ENCODE measurements at regions of chr14 and their contacts with region 1.

Region 1: GRCh38 chr14:22986508-22987054 is 4.2 kb upstream of the AJUBA start:
- DNase-seq: peak; percentile 70 to 95 (median 84)
- ATAC-seq: peak; percentile 58 to 70 (median 64)
- H3K4me3 ChIP-seq: no peak overlapping the region
- H3K4me3 Mint-ChIP-seq: no peak overlapping the region
- H3K27ac ChIP-seq: no peak overlapping the region
- H3K27ac Mint-ChIP-seq: no peak overlapping the region
- H3K4me1 ChIP-seq: peaks cover 0 to 20% of the 10 kb centered on the region in 2 experiments
- H3K4me1 Mint-ChIP-seq: peaks cover 0 to 1% (median 0%) of the 10 kb centered on the region in 3 donors
- H3K27me3 ChIP-seq: peaks cover 0 to 12% of the 10 kb centered on the region in 2 experiments
- H3K27me3 Mint-ChIP-seq: no peaks in the 10 kb centered on the region

Region 2: DNA sequence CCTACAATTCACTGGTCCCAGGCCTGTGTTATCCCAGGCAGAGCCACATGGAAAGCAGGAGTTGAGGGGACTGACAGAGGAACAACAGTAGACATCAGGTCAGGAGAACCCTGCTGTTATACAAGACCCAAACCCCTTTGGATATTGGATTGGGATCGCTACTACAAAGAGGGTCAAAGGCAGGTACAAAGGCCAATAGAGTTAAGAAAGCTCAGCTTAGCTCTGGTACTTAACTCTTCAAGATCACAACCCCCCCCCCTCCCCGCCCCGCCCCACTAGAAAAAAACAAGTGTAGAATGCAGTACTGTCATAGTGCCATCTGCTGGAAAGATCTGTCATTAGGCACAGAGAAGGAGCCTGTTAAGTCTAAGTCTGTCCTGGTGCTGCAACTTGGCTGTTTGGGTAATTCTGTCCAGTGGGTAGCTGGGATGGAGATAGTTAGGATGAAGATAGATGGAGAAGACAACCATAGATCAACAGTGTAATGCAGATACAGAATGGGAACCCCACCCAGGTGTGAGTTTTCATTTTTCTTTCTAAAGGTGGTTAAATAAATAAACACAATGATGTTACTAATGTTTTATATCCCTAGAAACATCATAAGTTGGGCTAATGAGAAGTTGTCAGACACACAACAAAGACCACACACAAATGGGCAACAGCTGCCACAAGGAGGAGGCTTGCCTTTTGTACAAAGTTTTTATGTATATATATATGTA is 86.3 kb before region 1 on chr14:
- CTCF ChIA-PET with region 1: no interaction called
- POLR2A ChIA-PET with region 1: interaction called in 1 of 2 experiments, 17 read pairs
- DNase-seq: peak in 26 of 35 experiments; percentile 17 to 85 (median 39)
- ATAC-seq: peak; percentile 73 to 81 (median 80)
- H3K4me3 ChIP-seq: no peak overlapping the region
- H3K4me3 Mint-ChIP-seq: no peak overlapping the region
- H3K27ac ChIP-seq: no peak overlapping the region
- H3K27ac Mint-ChIP-seq: peak overlapping the region in 1 of 2 donors; percentile 41
- H3K4me1 ChIP-seq: peaks cover 2 to 10% of the 10 kb centered on the region in 2 experiments
- H3K4me1 Mint-ChIP-seq: peaks cover 8 to 11% (median 9%) of the 10 kb centered on the region in 3 donors
- H3K27me3 ChIP-seq: no peaks in the 10 kb centered on the region
- H3K27me3 Mint-ChIP-seq: no peaks in the 10 kb centered on the region

Region 3: GRCh38 chr14:22973217-22974032 is 13.2 kb before region 1 on chr14:
- CTCF ChIA-PET with region 1: interaction called, 23 read pairs
- POLR2A ChIA-PET with region 1: interaction called in 1 of 2 experiments, 7 read pairs
- DNase-seq: peak in 11 of 35 experiments; percentile 9 to 71 (median 30)
- ATAC-seq: peak; percentile 39 to 66 (median 60)
- H3K4me3 ChIP-seq: no peak overlapping the region
- H3K4me3 Mint-ChIP-seq: no peak overlapping the region
- H3K27ac ChIP-seq: no peak overlapping the region
- H3K27ac Mint-ChIP-seq: no peak overlapping the region
- H3K4me1 ChIP-seq: no peaks in the 10 kb centered on the region
- H3K4me1 Mint-ChIP-seq: no peaks in the 10 kb centered on the region
- H3K27me3 ChIP-seq: peaks cover 0 to 4% of the 10 kb centered on the region in 2 experiments
- H3K27me3 Mint-ChIP-seq: peaks cover 0 to 2% of the 10 kb centered on the region in 2 donors

Region 4: DNA sequence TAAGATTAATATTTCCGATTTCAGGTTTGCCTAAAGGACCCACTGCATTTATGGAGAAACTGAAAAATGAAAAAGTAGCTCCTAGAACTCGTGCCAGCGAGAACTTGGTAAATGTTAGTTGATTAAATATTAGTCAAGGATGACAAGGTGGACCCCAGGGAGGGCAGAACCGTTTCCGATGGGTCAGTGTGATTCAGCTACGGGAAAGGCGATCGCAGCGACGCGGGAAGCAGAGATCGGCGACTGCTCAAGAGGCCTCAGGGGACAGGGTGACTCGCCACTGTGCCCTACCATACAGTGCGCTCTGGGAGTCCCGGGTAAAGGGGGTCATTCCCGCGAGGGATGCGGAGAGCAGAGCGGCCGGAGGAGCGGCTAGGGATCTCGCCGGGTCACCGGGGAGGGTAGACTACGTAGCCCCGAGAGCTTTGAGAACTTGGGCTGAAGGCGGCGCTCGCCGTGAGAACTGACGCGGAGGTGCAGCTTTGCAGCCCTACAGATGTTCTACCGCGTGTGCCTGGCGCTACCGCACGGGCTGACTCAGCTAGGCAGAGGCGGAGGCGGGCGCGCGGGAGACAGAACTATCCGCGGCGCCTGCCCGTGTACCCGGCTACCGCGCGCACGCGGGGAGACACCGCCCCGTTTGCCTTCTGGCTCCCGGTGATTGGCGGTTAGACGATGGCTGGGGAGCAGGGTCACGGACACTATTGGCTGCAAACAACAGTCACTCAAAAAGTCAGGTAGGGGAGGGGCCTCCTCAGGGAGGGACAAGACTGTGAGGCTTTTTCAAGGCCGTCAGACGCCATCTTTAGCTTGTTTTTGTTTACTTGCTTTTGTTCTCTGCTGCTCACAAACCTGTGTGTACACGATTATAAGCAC is 20.2 kb after region 1 on chr14:
- CTCF ChIA-PET with region 1: interaction called, 4 to 47 read pairs
- POLR2A ChIA-PET with region 1: interaction called, 3 to 10 read pairs
- DNase-seq: peak; percentile 89 to 99 (median 97)
- ATAC-seq: peak; percentile 94 to 97 (median 96)
- H3K4me3 ChIP-seq: peak overlapping the region; percentile 73 to 85
- H3K4me3 Mint-ChIP-seq: peak overlapping the region; percentile 96 to 98 (median 97)
- H3K27ac ChIP-seq: peak overlapping the region; percentile 85
- H3K27ac Mint-ChIP-seq: peak overlapping the region; percentile 98 to 99
- H3K4me1 ChIP-seq: peaks cover 25 to 32% of the 10 kb centered on the region in 2 experiments
- H3K4me1 Mint-ChIP-seq: peaks cover 36 to 47% (median 45%) of the 10 kb centered on the region in 3 donors
- H3K27me3 ChIP-seq: no peaks in the 10 kb centered on the region
- H3K27me3 Mint-ChIP-seq: no peaks in the 10 kb centered on the region

Region 5: DNA sequence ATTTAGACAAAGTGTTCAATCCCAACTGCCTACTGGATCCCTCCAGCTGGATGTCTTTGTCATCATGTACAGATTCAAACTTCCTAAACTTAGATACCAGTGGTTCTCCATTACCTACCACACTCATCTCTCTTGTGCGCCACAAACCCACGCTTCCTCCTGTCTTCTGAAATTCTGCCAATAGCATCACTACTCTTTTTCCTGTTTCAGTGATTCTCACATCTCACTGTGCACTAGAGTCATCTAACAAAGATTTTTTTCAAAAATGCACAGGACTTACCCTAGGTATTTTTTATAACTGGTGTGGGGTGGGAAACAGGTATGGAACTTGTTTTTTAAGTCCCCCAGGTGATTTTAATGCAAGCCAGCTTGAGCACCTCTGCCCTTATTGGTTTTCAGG is 42.2 kb after region 1 on chr14:
- CTCF ChIA-PET with region 1: interaction called, 9 to 15 read pairs
- POLR2A ChIA-PET with region 1: interaction called in 1 of 2 experiments, 4 read pairs
- DNase-seq: peak in 20 of 35 experiments; percentile 13 to 63 (median 24)
- ATAC-seq: peak; percentile 80 to 98 (median 92)
- H3K4me3 ChIP-seq: no peak overlapping the region
- H3K4me3 Mint-ChIP-seq: peak overlapping the region; percentile 0 to 51 (median 41)
- H3K27ac ChIP-seq: peak overlapping the region; percentile 64
- H3K27ac Mint-ChIP-seq: peak overlapping the region; percentile 67 to 84
- H3K4me1 ChIP-seq: peaks cover 25 to 36% of the 10 kb centered on the region in 2 experiments
- H3K4me1 Mint-ChIP-seq: peaks cover 54 to 61% (median 55%) of the 10 kb centered on the region in 3 donors
- H3K27me3 ChIP-seq: no peaks in the 10 kb centered on the region
- H3K27me3 Mint-ChIP-seq: no peaks in the 10 kb centered on the region

Region 6: DNA sequence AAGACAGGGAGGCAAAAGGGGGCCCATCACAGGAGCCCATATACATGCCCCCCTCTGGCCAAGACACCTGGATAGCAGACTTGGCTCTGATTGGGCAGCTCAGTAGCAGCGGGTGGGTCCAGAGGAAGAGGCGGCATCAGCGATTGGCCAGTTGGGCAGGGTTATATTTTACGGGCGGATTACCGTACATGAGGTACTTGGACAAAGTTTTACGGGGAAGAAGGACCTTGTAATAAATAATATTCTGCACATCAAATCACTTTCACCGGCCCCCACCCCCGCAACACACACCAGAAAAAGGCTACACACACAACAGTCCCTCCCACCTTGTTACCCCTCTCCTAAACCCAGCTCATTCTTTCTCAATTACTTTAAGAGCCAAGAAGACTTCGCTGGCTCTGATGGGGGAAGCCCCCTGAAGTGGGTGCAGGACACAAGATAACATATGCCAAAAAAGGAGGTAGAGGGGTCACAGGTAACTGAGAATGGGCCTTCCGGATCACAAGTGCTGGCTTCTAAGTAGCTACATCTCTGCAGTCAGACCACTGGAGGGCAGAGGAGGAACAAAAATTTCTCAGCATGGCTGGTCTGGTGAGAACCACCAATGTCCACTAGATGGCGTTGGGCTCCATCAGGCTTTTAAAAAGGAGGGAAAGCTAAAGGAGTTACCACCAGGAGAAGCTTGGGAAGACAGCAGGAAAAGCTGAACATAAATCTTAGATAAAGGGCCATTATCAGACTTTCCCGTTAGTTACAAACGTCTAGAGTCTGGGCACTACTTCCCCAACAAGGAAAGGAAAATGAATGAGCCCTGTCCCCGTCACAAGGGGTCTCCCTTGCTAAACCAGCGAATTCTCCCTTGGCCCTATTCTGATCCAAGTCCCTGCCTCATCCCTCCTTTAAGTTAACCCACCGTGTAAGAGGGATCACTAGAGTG is 82.2 kb after region 1 on chr14:
- CTCF ChIA-PET with region 1: interaction called, 4 to 30 read pairs
- POLR2A ChIA-PET with region 1: no interaction called
- DNase-seq: peak; percentile 40 to 90 (median 66)
- ATAC-seq: peak; percentile 76 to 86 (median 79)
- H3K4me3 ChIP-seq: no peak overlapping the region
- H3K4me3 Mint-ChIP-seq: peak overlapping the region; percentile 17 to 34 (median 31)
- H3K27ac ChIP-seq: peak overlapping the region; percentile 38
- H3K27ac Mint-ChIP-seq: peak overlapping the region; percentile 61
- H3K4me1 ChIP-seq: peaks cover 12 to 37% of the 10 kb centered on the region in 2 experiments
- H3K4me1 Mint-ChIP-seq: peaks cover 35 to 45% (median 41%) of the 10 kb centered on the region in 3 donors
- H3K27me3 ChIP-seq: no peaks in the 10 kb centered on the region
- H3K27me3 Mint-ChIP-seq: no peaks in the 10 kb centered on the region